ENCODE measurements at regions of chr16 and their contacts with region 1.

Region 1: DNA sequence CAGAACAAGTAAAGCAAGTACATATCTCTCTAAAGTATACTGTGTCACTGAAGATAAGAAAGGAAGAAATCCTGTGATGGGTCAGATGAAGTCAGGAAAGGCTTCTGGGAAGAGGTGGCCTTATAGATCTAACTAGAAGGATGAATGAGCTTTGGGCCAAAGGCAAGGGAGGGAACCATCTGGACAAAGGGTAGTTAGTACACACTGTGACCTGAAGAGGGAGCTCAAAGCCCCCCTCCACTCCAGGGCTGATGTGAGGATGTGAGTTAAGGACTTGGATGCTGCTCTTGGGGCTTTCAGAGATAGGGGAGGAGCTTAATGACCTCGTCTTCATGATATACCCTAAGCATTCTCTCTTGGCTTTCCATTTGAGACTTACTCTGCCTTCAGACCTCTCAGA is 185.3 kb upstream of the CACNG3 start:
- DNase-seq: no peak
- H3K4me3 ChIP-seq: no peak overlapping the region
- H3K4me3 Mint-ChIP-seq: peak overlapping the region in 1 of 7 donors; percentile 23
- H3K27ac ChIP-seq: no peak overlapping the region
- H3K27ac Mint-ChIP-seq: peak overlapping the region in 3 of 8 donors; percentile 23 to 68 (median 68)
- H3K4me1 ChIP-seq: no peaks in the 10 kb centered on the region
- H3K4me1 Mint-ChIP-seq: peaks cover 43 to 76% (median 69%) of the 10 kb centered on the region in 3 donors
- H3K27me3 ChIP-seq: no peaks in the 10 kb centered on the region
- H3K27me3 Mint-ChIP-seq: no peaks in the 10 kb centered on the region

Region 2: DNA sequence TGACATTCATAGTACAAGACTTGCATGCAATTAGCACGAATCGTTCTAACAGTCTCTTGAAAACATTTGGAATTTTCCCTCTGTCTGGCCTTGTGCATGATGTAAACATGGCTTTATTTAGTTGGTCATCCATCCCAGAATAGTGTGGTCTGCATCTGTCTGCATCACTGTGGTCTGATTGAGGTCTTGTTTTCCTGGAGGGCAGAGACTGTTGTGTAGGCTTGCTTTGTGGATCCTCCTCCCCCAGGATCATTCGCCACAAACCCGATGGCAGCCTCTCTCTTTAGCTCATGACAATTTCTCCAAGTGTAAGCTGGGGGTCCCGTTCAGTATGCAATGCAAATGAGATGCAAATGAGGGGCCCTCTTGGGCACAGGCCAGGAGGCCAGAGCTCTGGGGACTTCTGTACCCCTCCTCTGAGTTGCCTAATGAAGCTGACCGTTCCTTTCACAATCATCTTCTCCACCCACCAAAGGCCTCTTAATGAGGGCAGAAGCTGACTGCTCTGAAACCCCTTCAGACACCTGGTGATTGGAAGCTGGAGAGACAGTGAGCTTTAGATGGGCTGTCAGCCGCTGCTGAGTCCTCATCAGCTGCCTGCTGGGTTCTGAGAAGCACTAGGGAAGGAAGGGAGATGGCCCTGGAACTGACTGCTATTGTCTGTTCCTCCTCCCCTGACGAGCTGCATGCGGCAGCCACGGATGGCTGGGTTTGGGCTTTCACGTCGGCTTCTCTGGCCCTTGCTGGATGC is 15.9 kb before region 1 on chr16:
- CTCF ChIA-PET with region 1: interaction called, 10 read pairs
- POLR2A ChIA-PET with region 1: no interaction called
- DNase-seq: no peak
- H3K4me3 ChIP-seq: no peak overlapping the region
- H3K4me3 Mint-ChIP-seq: peak overlapping the region in 1 of 7 donors; percentile 5
- H3K27ac ChIP-seq: no peak overlapping the region
- H3K27ac Mint-ChIP-seq: no peak overlapping the region
- H3K4me1 ChIP-seq: peaks cover 3% of the 10 kb centered on the region
- H3K4me1 Mint-ChIP-seq: peaks cover 37 to 70% (median 49%) of the 10 kb centered on the region in 3 donors
- H3K27me3 ChIP-seq: no peaks in the 10 kb centered on the region
- H3K27me3 Mint-ChIP-seq: peaks cover 0 to 2% of the 10 kb centered on the region in 2 donors